Psoas muscle (tissue), 8 donors: ENCODE measurements at regions of chr3 and their contacts with region 1.

Region 1: GRCh38 chr3:115085197-115085865 is 61.8 kb downstream of the ZBTB20 start:
- DNase-seq: no peak
- ATAC-seq: peak in 2 of 4 donors; percentile 67 to 74
- H3K4me3 ChIP-seq: peak overlapping the region; percentile 23
- H3K27ac ChIP-seq: peak overlapping the region; percentile 24
- H3K4me1 ChIP-seq: peaks cover 67% of the 10 kb centered on the region
- H3K27me3 ChIP-seq: no peaks in the 10 kb centered on the region
- CTCF ChIP-seq: peak; percentile 5

Region 2: DNA sequence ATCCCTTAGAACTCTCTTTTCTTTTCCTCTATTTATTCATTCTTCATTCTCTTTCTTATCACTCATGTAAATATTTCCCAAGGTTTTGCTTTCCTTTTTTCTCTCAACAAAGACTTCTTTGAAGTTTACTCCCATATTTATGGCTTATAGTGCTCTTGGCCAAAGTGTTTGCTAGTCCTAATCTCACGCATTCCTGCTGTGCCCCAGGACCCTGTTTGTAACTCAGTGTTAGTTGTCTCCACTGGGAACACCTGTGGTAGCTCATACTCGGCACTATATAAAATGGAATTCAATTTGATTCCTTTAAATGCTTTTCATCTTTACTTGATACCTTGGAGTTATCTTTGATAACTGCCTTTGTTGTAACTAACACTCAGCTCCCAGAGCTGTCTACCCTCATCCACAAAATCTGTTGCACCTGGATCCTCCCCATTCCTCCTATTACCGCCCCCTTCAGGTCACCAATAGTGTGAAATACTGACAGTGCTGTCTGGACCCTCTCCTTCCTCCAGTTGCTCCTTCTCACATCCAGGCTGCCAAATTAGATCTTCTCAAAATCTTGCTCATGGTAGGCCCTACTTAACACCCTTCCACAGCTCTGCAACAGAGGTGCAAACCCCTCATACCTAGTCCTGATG is 714.7 kb before region 1 on chr3:
- intact Hi-C with region 1: loop called in 1 of 2 experiments (anchors 10 kb)
- DNase-seq: no peak
- ATAC-seq: no peak
- H3K4me3 ChIP-seq: no peak overlapping the region
- H3K27ac ChIP-seq: no peak overlapping the region
- H3K4me1 ChIP-seq: peaks cover 73% of the 10 kb centered on the region
- H3K27me3 ChIP-seq: no peaks in the 10 kb centered on the region
- CTCF ChIP-seq: no peak

Region 3: GRCh38 chr3:114827495-114827894 is 257.8 kb before region 1 on chr3:
- intact Hi-C with region 1: loop called in 1 of 2 experiments (anchors 5 kb)
- DNase-seq: no peak
- ATAC-seq: peak in 3 of 4 donors; percentile 74 to 83 (median 76)
- H3K4me3 ChIP-seq: no peak overlapping the region
- H3K27ac ChIP-seq: no peak overlapping the region
- H3K4me1 ChIP-seq: no peaks in the 10 kb centered on the region
- H3K27me3 ChIP-seq: no peaks in the 10 kb centered on the region
- CTCF ChIP-seq: peak; percentile 62

Region 4: DNA sequence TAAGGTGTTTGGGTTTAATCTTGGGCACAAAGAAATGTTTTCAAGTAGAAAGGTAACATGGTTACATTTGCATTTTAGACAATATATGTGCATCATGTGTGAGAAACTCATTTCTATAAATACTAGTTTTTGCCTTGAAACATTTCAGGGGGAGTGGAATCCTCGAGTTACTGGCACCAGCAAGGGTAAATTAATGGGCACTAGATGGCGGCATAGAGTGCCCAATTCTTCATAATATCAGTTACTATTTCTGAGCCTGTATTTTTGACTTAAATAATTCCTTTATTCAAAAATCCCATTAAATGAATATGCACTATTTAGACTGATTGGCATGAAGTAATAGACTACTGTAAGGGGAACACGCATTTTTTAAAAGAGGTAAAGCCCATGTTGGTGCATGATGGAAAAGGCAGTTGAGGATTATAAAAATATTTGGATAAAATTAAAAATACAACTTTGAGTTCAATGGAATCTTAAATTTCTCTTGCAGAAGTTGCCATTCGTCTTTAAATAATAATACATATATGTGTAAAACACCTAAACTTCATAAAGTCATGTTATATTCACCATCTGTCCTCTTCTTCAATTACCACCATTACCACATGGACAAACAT is 44.6 kb before region 1 on chr3:
- intact Hi-C with region 1: loop called in 1 of 2 experiments (anchors 5 kb)
- DNase-seq: no peak
- ATAC-seq: peak in 1 of 4 donors; percentile 58
- H3K4me3 ChIP-seq: no peak overlapping the region
- H3K27ac ChIP-seq: no peak overlapping the region
- H3K4me1 ChIP-seq: peaks cover 6% of the 10 kb centered on the region
- H3K27me3 ChIP-seq: no peaks in the 10 kb centered on the region
- CTCF ChIP-seq: peak; percentile 55

Region 5: DNA sequence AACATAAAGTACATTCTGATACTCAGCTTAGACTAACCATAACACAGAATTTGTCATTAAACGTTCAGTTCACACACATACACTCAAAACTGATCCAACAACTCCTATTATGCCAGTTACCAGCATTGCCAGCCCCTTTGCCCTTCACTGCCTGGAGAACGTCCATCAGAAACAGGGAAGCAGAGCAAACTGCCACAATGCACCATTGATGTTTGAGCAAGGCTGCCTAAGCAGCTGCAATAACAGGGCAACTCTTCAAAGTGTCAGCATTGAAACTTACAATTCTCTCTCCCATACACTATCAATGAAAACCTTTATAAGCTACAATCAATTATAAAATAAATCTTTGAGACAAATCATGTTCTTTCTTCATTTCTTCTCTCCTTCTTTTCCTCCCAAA is 23.3 kb before region 1 on chr3:
- intact Hi-C with region 1: no loop called
- DNase-seq: no peak
- ATAC-seq: no peak
- H3K4me3 ChIP-seq: no peak overlapping the region
- H3K27ac ChIP-seq: no peak overlapping the region
- H3K4me1 ChIP-seq: peaks cover 4% of the 10 kb centered on the region
- H3K27me3 ChIP-seq: no peaks in the 10 kb centered on the region
- CTCF ChIP-seq: no peak

Region 6: GRCh38 chr3:115836944-115837343 is 751.6 kb after region 1 on chr3:
- intact Hi-C with region 1: no loop called
- DNase-seq: no peak
- ATAC-seq: no peak
- H3K4me3 ChIP-seq: no peak overlapping the region
- H3K27ac ChIP-seq: no peak overlapping the region
- H3K4me1 ChIP-seq: no peaks in the 10 kb centered on the region
- H3K27me3 ChIP-seq: peaks cover 0 to 2% (median 0%) of the 10 kb centered on the region in 3 donors
- CTCF ChIP-seq: peak; percentile 40